Right ventricle myocardium inferior (tissue), 1 donor: ENCODE measurements at regions of chr21 and their contacts with region 1.

Region 1: GRCh38 chr21:34565238-34565637 is 49.7 kb downstream of the RCAN1 start:
- DNase-seq: no peak
- ATAC-seq: peak; percentile 83

Region 2: GRCh38 chr21:34536820-34537219 is 28.4 kb before region 1 on chr21:
- intact Hi-C with region 1: loop called (anchors 2 kb)
- DNase-seq: no peak
- ATAC-seq: no peak